ENCODE measurements at regions of chrX and their contacts with region 1.

Region 1: GRCh38 chrX:135531813-135532212 is 11.4 kb downstream of the INTS6L start:
- H3K4me3 ChIP-seq: no peak overlapping the region
- H3K27ac ChIP-seq: 0 out of 2 replicates have a peak overlapping the region, but pooled peaks have one; percentile 3
- H3K4me1 ChIP-seq: peaks cover 3% of the 10 kb centered on the region; the same call in 1 of the 2 replicates
- CTCF ChIP-seq: no peak

Region 2: DNA sequence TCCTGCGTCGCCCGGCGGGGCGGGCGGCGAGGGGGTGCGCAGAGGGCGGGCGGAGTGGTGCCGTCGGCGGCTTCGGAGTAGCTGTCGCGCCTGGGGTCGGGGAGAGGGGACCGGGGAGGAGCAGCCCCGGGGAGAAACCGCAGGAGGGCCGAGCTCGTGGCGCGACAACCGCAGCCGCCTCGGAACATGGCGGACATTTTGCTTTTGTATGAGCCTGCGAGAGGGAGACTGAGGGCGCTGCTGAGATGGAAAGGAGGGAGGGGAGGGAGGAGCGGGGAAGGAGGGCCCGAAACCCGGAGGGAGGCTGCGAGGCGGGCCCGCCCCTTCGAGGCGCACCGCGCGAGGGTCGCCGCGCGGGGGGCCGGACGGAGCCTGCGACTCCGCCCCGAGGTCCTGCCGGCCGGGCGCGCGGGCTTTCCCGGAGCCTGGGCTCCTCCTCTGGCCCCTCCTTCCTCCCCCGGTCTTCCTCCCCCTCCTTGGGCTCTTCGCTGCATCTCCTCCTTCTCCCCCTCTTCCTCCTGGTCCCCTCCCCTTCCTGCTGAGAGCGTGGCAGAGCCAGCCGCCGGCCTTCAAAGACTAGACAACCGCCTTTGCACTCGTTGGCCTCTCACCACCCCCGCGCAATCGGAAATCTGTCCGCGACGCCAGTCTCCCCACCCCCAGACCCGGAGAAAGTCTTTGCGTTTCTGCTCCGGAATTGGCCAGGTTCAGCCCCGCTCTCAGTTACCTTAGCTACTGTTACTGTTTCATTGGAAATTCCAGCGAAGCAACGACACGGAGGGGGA is 10.2 kb before region 1 on chrX:
- CTCF ChIA-PET with region 1: interaction called, 3 read pairs
- POLR2A ChIA-PET with region 1: interaction called, 19 read pairs
- H3K4me3 ChIP-seq: peak overlapping the region; percentile 56
- H3K27ac ChIP-seq: peak overlapping the region; percentile 81
- H3K4me1 ChIP-seq: peaks cover 15% of the 10 kb centered on the region; the same call in 1 of the 2 replicates
- CTCF ChIP-seq: 0 out of 2 replicates have a peak, but pooled peaks have one; percentile 47

Region 3: GRCh38 chrX:135543924-135544323 is 12.1 kb after region 1 on chrX:
- CTCF ChIA-PET with region 1: interaction called, 24 read pairs
- POLR2A ChIA-PET with region 1: interaction called, 4 read pairs
- H3K4me3 ChIP-seq: no peak overlapping the region
- H3K27ac ChIP-seq: no peak overlapping the region
- H3K4me1 ChIP-seq: no peaks in the 10 kb centered on the region
- CTCF ChIP-seq: no peak

Region 4: DNA sequence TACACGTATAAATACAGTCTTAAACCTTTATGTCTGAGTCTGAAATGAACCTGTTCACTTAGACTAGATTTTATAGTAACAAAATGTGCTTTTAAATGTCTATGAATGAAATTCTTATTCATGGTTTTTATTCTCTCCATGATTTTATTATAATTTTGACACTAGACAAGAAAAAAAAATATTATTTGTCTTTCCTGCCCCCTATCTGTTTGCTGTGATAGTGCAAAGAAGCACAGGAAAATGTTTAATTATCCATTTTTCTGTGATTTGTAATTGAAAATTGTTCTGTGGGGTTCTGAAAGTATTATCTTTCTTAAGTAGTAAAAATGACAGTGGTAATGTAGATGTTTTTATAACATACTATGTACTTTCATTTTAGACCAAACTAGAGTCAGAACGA is 40.6 kb after region 1 on chrX:
- CTCF ChIA-PET with region 1: no interaction called
- POLR2A ChIA-PET with region 1: no interaction called
- H3K4me3 ChIP-seq: no peak overlapping the region
- H3K27ac ChIP-seq: no peak overlapping the region
- H3K4me1 ChIP-seq: no peaks in the 10 kb centered on the region
- CTCF ChIP-seq: no peak

Region 5: GRCh38 chrX:135893294-135893817 is 361.5 kb after region 1 on chrX and contains the starts of genes CT45A10 and SAGE1:
- CTCF ChIA-PET with region 1: no interaction called
- POLR2A ChIA-PET with region 1: no interaction called
- H3K4me3 ChIP-seq: no peak within 1 kb of the TSS
- H3K27ac ChIP-seq: no peak within 1 kb of the TSS
- H3K4me1 ChIP-seq: no peaks in the 10 kb centered on the region
- CTCF ChIP-seq: no peak

Measured in HEK293 (cell line).